Caco-2 (cell line): ENCODE measurements at regions of chr15 and their contacts with region 1.

Region 1: GRCh38 chr15:89760303-89761008 is 9.4 kb upstream of the MESP1 start:
- DNase-seq: peak; percentile 74 to 89
- H3K4me3 ChIP-seq: no peak overlapping the region
- H3K4me3 Mint-ChIP-seq: no peak overlapping the region
- H3K27ac Mint-ChIP-seq: no peak overlapping the region
- H3K4me1 ChIP-seq: peaks cover 26% of the 10 kb centered on the region
- H3K4me1 Mint-ChIP-seq: peaks cover 7% of the 10 kb centered on the region
- H3K27me3 ChIP-seq: no peaks in the 10 kb centered on the region
- H3K27me3 Mint-ChIP-seq: no peaks in the 10 kb centered on the region
- CTCF ChIP-seq: peak; percentile 79 to 96

Region 2: DNA sequence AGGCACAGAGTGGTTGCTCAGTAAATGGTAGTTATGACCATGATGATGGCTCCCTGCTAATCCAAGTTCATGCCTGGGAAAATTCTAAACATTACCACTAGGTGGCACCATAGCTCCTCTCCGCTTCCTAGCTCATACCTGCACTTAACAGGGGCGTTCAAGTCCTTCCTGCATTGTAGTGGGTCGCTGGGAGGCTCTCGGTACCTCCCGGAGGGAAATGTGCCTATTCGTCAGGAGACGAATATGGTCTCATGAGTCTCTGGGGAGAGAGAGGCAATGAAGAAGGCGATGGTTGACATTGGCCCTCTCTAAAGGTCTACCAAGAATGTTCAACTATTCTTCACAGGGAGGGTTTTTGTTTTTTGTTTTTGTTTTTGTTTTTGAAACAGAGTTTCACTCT is 20.3 kb before region 1 on chr15:
- CTCF ChIA-PET with region 1: interaction called, 9 read pairs
- POLR2A ChIA-PET with region 1: no interaction called
- intact Hi-C with region 1: loop called (anchors 1 kb)
- DNase-seq: peak; percentile 76 to 81
- H3K4me3 ChIP-seq: no peak overlapping the region
- H3K4me3 Mint-ChIP-seq: peak overlapping the region; percentile 50
- H3K27ac Mint-ChIP-seq: no peak overlapping the region
- H3K4me1 ChIP-seq: no peaks in the 10 kb centered on the region
- H3K4me1 Mint-ChIP-seq: no peaks in the 10 kb centered on the region
- H3K27me3 ChIP-seq: no peaks in the 10 kb centered on the region; the same call in 1 of the 2 replicates
- H3K27me3 Mint-ChIP-seq: peaks cover 8% of the 10 kb centered on the region
- CTCF ChIP-seq: peak; percentile 77 to 84

Region 3: GRCh38 chr15:89772932-89773583 is 12.6 kb after region 1 on chr15:
- CTCF ChIA-PET with region 1: interaction called, 21 read pairs
- POLR2A ChIA-PET with region 1: no interaction called
- intact Hi-C with region 1: no loop called
- DNase-seq: peak in 1 of 2 experiments; percentile 40
- H3K4me3 ChIP-seq: no peak overlapping the region
- H3K4me3 Mint-ChIP-seq: no peak overlapping the region
- H3K27ac Mint-ChIP-seq: no peak overlapping the region
- H3K4me1 ChIP-seq: 0 out of 2 replicates have a peak, but pooled peaks cover 8% of the 10 kb centered on the region
- H3K4me1 Mint-ChIP-seq: no peaks in the 10 kb centered on the region
- H3K27me3 ChIP-seq: no peaks in the 10 kb centered on the region
- H3K27me3 Mint-ChIP-seq: no peaks in the 10 kb centered on the region
- CTCF ChIP-seq: peak; percentile 22 to 39

Region 4: DNA sequence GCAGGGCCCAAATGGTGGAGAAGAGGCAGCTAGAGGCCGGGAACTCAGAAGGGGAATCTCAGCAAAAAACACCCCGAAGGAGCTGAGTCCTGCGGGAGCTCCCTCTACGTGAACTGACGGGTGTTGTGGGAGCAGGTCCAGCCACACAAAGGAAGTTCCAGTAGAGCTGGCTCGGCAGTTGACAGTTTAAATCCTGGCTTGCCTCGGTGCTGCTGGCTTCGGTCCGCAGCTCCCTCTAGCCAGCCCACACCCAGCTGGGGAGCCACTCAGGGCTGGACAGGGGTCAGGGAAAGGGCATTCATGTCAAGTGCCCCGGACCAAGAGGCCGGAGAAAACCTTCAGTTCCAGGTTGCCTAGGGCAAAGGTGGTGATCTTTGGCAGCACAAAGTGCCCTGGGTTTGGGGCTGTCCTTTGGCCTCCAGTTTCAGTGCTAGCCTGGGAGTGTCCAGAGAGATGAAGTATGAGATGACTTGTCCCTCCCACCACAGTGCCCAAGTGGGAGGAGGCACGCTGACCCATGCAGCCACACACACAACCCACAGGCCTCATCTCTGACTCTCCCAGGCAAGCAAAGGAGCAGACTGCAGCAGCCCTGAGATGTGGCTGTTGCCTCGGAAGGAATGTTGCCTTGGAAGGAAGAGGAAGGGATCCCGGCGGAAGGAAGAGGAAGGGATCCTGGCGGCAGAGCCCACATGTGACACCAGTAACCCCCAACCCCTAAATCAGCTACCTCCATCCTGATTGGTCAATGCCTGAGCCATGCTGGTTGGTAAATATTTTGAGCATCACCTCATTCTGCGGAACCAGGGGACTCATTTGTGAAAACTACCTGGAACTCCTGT is 68.0 kb after region 1 on chr15:
- CTCF ChIA-PET with region 1: interaction called, 6 read pairs
- POLR2A ChIA-PET with region 1: interaction called, 3 read pairs
- intact Hi-C with region 1: loop called (anchors 10 kb)
- DNase-seq: no peak
- H3K4me3 ChIP-seq: no peak overlapping the region
- H3K4me3 Mint-ChIP-seq: no peak overlapping the region
- H3K27ac Mint-ChIP-seq: no peak overlapping the region
- H3K4me1 ChIP-seq: peaks cover 16% of the 10 kb centered on the region; the same call in 1 of the 2 replicates
- H3K4me1 Mint-ChIP-seq: peaks cover 21% of the 10 kb centered on the region
- H3K27me3 ChIP-seq: no peaks in the 10 kb centered on the region
- H3K27me3 Mint-ChIP-seq: no peaks in the 10 kb centered on the region
- CTCF ChIP-seq: no peak

Region 5: GRCh38 chr15:89863918-89864317 is 103.5 kb after region 1 on chr15:
- CTCF ChIA-PET with region 1: interaction called, 10 read pairs
- POLR2A ChIA-PET with region 1: no interaction called
- intact Hi-C with region 1: no loop called
- DNase-seq: no peak
- H3K4me3 ChIP-seq: no peak overlapping the region
- H3K4me3 Mint-ChIP-seq: no peak overlapping the region
- H3K27ac Mint-ChIP-seq: no peak overlapping the region
- H3K4me1 ChIP-seq: peaks cover 14% of the 10 kb centered on the region
- H3K4me1 Mint-ChIP-seq: peaks cover 11% of the 10 kb centered on the region
- H3K27me3 ChIP-seq: no peaks in the 10 kb centered on the region
- H3K27me3 Mint-ChIP-seq: no peaks in the 10 kb centered on the region
- CTCF ChIP-seq: no peak

Region 6: GRCh38 chr15:89874926-89875564 is 114.6 kb after region 1 on chr15:
- CTCF ChIA-PET with region 1: interaction called, 154 read pairs
- POLR2A ChIA-PET with region 1: interaction called, 3 read pairs
- intact Hi-C with region 1: loop called (anchors 1 kb)
- DNase-seq: peak; percentile 76 to 82
- H3K4me3 ChIP-seq: no peak overlapping the region
- H3K4me3 Mint-ChIP-seq: no peak overlapping the region
- H3K27ac Mint-ChIP-seq: no peak overlapping the region
- H3K4me1 ChIP-seq: peaks cover 6% of the 10 kb centered on the region; the same call in 1 of the 2 replicates
- H3K4me1 Mint-ChIP-seq: no peaks in the 10 kb centered on the region
- H3K27me3 ChIP-seq: no peaks in the 10 kb centered on the region
- H3K27me3 Mint-ChIP-seq: no peaks in the 10 kb centered on the region
- CTCF ChIP-seq: peak; percentile 88 to 94

Region 7: GRCh38 chr15:89888214-89888804 is 127.9 kb after region 1 on chr15:
- CTCF ChIA-PET with region 1: interaction called, 25 read pairs
- POLR2A ChIA-PET with region 1: interaction called, 3 read pairs
- intact Hi-C with region 1: loop called (anchors 1 kb)
- DNase-seq: peak in 1 of 2 experiments; percentile 39
- H3K4me3 ChIP-seq: no peak overlapping the region
- H3K4me3 Mint-ChIP-seq: no peak overlapping the region
- H3K27ac Mint-ChIP-seq: no peak overlapping the region
- H3K4me1 ChIP-seq: no peaks in the 10 kb centered on the region
- H3K4me1 Mint-ChIP-seq: no peaks in the 10 kb centered on the region
- H3K27me3 ChIP-seq: no peaks in the 10 kb centered on the region
- H3K27me3 Mint-ChIP-seq: no peaks in the 10 kb centered on the region
- CTCF ChIP-seq: peak; percentile 48 to 63

Region 8: GRCh38 chr15:89912674-89913396 is 152.4 kb after region 1 on chr15 and contains the start of gene ARPIN:
- CTCF ChIA-PET with region 1: no interaction called
- POLR2A ChIA-PET with region 1: no interaction called
- intact Hi-C with region 1: no loop called
- DNase-seq: peak; percentile 67 to 77
- H3K4me3 ChIP-seq: peak within 1 kb of the TSS; percentile 54
- H3K4me3 Mint-ChIP-seq: peak within 1 kb of the TSS; percentile 84
- H3K27ac Mint-ChIP-seq: peak within 1 kb of the TSS; percentile 75
- H3K4me1 ChIP-seq: peaks cover 23% of the 10 kb centered on the region
- H3K4me1 Mint-ChIP-seq: peaks cover 33% of the 10 kb centered on the region
- H3K27me3 ChIP-seq: no peaks in the 10 kb centered on the region
- H3K27me3 Mint-ChIP-seq: no peaks in the 10 kb centered on the region
- CTCF ChIP-seq: no peak
- total RNA-seq, gene ARPIN: 11.5 and 13.3 TPM in 2 replicates